IMR-90 (cell line): ENCODE measurements at regions of chr3 and their contacts with region 1.

Region 1: GRCh38 chr3:122101646-122102045 is 46.5 kb downstream of the CD86 start:
- DNase-seq: peak; percentile 66
- ATAC-seq: peak; percentile 72
- H3K4me3 ChIP-seq: no peak overlapping the region
- H3K27ac ChIP-seq: no peak overlapping the region
- H3K4me1 ChIP-seq: no peaks in the 10 kb centered on the region
- H3K27me3 ChIP-seq: peaks cover 13% of the 10 kb centered on the region
- CTCF ChIP-seq: peak; percentile 74
- POLR2A ChIP-seq: no peak
- RAD21 ChIP-seq: peak; percentile 82

Region 2: DNA sequence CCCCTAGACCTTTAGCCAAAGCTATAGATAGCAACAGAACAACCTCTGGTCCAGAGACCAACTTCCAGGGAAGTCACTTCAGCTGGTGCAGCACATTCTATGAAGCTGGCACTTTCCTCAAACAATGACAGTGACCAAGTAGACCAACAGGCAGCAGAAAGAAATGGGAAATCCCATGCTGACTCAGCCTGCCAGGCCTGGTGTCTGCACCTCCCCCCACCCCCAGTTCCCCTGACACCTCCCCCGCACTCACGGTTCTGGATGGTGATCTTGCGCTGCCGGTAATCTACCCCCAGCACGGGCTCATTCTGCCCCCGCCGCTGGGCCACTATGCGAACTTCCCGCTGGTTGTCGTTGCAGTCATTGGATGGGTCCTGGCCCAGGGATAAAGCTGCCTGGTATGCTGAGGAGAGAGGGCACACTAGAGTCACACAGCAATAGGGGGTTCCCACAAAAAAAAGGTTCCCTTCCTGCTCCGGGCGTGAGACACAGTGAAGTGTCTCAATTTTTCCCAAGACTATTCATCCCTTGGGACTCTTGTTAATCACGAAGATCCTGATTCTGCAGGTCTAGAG is 96.6 kb before region 1 on chr3:
- CTCF ChIA-PET with region 1: no interaction called
- POLR2A ChIA-PET with region 1: no interaction called
- dilution Hi-C with region 1: no loop called
- in situ Hi-C with region 1: no loop called
- intact Hi-C with region 1: no loop called
- DNase-seq: no peak
- ATAC-seq: no peak
- H3K4me3 ChIP-seq: no peak overlapping the region
- H3K27ac ChIP-seq: no peak overlapping the region
- H3K4me1 ChIP-seq: no peaks in the 10 kb centered on the region
- H3K27me3 ChIP-seq: no peaks in the 10 kb centered on the region; the same call in none of the 2 replicates
- CTCF ChIP-seq: no peak
- POLR2A ChIP-seq: no peak
- RAD21 ChIP-seq: no peak

Region 3: GRCh38 chr3:122268257-122269024 is 166.8 kb after region 1 on chr3:
- CTCF ChIA-PET with region 1: no interaction called
- POLR2A ChIA-PET with region 1: no interaction called
- dilution Hi-C with region 1: no loop called
- in situ Hi-C with region 1: loop called (anchors 10 kb)
- intact Hi-C with region 1: no loop called
- DNase-seq: no peak
- ATAC-seq: no peak
- H3K4me3 ChIP-seq: no peak overlapping the region
- H3K27ac ChIP-seq: no peak overlapping the region
- H3K4me1 ChIP-seq: no peaks in the 10 kb centered on the region
- H3K27me3 ChIP-seq: peaks cover 7% of the 10 kb centered on the region
- CTCF ChIP-seq: no peak
- POLR2A ChIP-seq: no peak
- RAD21 ChIP-seq: no peak

Region 4: DNA sequence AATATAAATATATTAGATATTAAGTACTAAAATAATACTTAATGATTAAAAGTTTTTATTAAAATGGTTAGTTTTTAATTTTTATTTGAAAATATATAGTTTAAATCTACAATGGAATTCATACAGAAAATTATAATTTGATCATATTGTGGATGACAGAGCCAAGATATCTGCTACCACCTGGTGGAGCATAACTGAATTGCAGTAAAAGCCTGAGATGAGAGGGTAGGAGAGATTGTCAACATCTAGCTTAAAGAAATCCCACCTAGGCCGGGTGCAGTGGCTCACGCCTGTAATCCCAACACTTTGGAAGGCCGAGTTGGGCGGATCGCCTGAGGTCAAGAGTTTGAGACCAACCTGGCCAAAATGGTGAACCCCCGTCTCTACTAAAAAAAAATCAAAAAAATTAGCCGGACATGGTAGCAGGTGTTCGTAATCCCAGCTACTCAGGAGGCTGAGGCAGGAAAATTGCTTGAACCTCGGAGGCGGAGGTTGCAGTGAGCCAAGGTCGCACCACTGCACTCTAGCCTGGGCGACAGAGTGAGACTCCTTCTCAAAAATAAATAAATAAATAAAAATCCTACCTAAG is 198.3 kb after region 1 on chr3:
- CTCF ChIA-PET with region 1: no interaction called
- POLR2A ChIA-PET with region 1: no interaction called
- dilution Hi-C with region 1: no loop called
- in situ Hi-C with region 1: no loop called
- intact Hi-C with region 1: loop called (anchors 1 kb)
- DNase-seq: peak; percentile 17
- ATAC-seq: no peak
- H3K4me3 ChIP-seq: no peak overlapping the region
- H3K27ac ChIP-seq: no peak overlapping the region
- H3K4me1 ChIP-seq: no peaks in the 10 kb centered on the region
- H3K27me3 ChIP-seq: no peaks in the 10 kb centered on the region
- CTCF ChIP-seq: peak; percentile 54
- POLR2A ChIP-seq: no peak
- RAD21 ChIP-seq: peak; percentile 56

Region 5: DNA sequence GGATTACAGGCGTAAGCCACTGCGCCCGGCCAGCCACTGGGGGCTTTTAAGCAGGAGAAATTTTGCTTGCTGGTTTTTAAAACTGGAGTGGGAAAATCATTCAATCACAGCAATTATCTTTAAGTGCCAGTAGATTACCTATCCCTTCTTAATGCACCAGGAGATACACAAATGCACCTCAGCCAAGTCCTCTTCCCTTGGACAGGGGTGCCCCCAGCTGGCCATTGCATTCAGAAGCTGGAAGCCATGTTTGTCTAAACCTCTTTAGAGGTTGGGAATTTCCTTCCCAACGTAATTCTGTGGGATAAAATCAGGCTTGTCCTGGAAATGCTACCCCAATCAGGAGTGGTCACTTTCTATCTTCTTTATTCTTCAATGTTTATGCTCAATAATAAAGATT is 254.8 kb after region 1 on chr3:
- CTCF ChIA-PET with region 1: interaction called, 4 read pairs
- POLR2A ChIA-PET with region 1: no interaction called
- dilution Hi-C with region 1: no loop called
- in situ Hi-C with region 1: loop called (anchors 10 kb)
- intact Hi-C with region 1: loop called (anchors 1 kb)
- DNase-seq: peak; percentile 54
- ATAC-seq: peak; percentile 75
- H3K4me3 ChIP-seq: no peak overlapping the region
- H3K27ac ChIP-seq: no peak overlapping the region
- H3K4me1 ChIP-seq: no peaks in the 10 kb centered on the region
- H3K27me3 ChIP-seq: no peaks in the 10 kb centered on the region
- CTCF ChIP-seq: peak; percentile 55
- POLR2A ChIP-seq: no peak
- RAD21 ChIP-seq: peak; percentile 66